ENCODE measurements at regions of chrX and their contacts with region 1.

Region 1: DNA sequence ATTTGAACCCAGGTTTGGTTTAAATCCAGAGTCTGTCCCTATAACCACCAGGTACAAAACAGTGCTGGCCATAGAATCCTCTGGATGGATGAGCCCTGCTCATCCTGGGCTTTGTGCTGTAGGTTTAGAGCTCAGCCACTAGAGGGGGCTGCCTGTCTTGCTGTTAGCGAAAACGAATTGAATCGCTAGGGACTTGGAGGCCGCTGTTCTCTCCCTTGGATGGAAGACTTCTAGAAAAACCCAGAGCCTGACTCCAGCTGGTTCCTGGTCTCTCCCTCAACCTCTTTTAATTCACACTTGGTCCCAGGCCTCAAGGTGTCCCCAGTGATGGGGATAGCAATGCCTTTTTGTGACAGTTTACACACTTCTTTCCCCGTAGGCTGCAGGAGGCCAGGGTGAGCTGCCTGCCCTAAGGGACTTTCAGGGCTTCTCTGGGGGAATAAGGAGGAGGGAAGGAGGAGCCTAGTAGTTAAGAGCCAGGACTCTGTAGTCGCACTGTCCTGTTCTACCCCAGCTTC is 8.7 kb downstream of the RIPPLY1 start:
- DNase-seq: peak; percentile 79
- H3K4me3 Mint-ChIP-seq: no peak overlapping the region
- H3K27ac Mint-ChIP-seq: peak overlapping the region; percentile 25
- H3K4me1 Mint-ChIP-seq: peaks cover 21% of the 10 kb centered on the region
- H3K27me3 Mint-ChIP-seq: peaks cover 53% of the 10 kb centered on the region
- CTCF ChIP-seq: peak; percentile 83

Region 2: DNA sequence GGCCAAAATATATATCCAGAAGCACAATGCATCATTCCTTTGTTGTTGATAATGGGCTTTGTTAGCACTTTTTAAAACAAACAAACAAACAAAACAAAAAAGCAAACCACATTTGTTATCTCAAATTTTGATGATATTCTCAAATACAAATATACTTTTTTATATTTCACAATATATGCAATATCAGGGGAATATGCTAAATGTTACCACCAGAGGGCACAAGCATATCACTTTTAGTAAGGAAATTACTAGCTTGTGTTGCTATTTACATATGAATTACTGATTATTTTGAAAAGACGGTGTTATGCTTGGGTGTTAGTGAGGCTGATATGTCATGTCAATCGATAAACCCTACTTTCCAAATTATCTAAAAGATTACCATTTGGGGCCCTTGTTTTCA is 20.4 kb before region 1 on chrX:
- CTCF ChIA-PET with region 1: interaction called, 50 read pairs
- POLR2A ChIA-PET with region 1: no interaction called
- intact Hi-C with region 1: no loop called
- DNase-seq: peak; percentile 50
- H3K4me3 Mint-ChIP-seq: no peak overlapping the region
- H3K27ac Mint-ChIP-seq: no peak overlapping the region
- H3K4me1 Mint-ChIP-seq: no peaks in the 10 kb centered on the region
- H3K27me3 Mint-ChIP-seq: peaks cover 37% of the 10 kb centered on the region
- CTCF ChIP-seq: peak; percentile 64

Region 3: GRCh38 chrX:106933041-106933961 is 38.9 kb after region 1 on chrX:
- CTCF ChIA-PET with region 1: interaction called, 14 read pairs
- POLR2A ChIA-PET with region 1: no interaction called
- intact Hi-C with region 1: no loop called
- DNase-seq: peak; percentile 8
- H3K4me3 Mint-ChIP-seq: no peak overlapping the region
- H3K27ac Mint-ChIP-seq: no peak overlapping the region
- H3K4me1 Mint-ChIP-seq: no peaks in the 10 kb centered on the region
- H3K27me3 Mint-ChIP-seq: peaks cover 19% of the 10 kb centered on the region
- CTCF ChIP-seq: no peak

Region 4: GRCh38 chrX:106952988-106953387 is 58.5 kb after region 1 on chrX:
- CTCF ChIA-PET with region 1: interaction called, 67 read pairs
- POLR2A ChIA-PET with region 1: no interaction called
- intact Hi-C with region 1: loop called (anchors 1 kb)
- DNase-seq: peak; percentile 33
- H3K4me3 Mint-ChIP-seq: no peak overlapping the region
- H3K27ac Mint-ChIP-seq: no peak overlapping the region
- H3K4me1 Mint-ChIP-seq: no peaks in the 10 kb centered on the region
- H3K27me3 Mint-ChIP-seq: peaks cover 61% of the 10 kb centered on the region
- CTCF ChIP-seq: peak; percentile 54

Region 5: DNA sequence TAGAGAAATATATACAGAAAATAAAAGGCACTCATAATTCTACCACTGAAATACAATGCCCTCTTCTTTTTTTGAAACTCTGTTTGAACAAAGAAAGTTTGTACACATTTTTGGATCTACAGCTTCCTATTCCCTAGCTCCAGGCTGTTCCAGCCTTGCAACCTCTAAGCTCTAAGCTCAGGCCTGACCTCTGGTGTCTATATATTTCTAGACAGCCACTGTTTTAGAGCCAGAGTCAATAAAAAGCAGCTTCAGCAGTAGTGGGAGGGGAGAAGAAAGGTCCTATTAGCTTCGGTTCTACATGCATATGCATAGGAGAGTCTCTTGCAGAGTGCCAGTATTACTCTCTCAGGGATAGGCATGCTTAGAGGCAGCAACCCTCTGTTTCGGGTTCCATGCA is 65.5 kb after region 1 on chrX:
- CTCF ChIA-PET with region 1: interaction called, 67 read pairs
- POLR2A ChIA-PET with region 1: interaction called, 3 read pairs
- intact Hi-C with region 1: loop called (anchors 2 kb)
- DNase-seq: peak; percentile 21
- H3K4me3 Mint-ChIP-seq: no peak overlapping the region
- H3K27ac Mint-ChIP-seq: no peak overlapping the region
- H3K4me1 Mint-ChIP-seq: no peaks in the 10 kb centered on the region
- H3K27me3 Mint-ChIP-seq: peaks cover 56% of the 10 kb centered on the region
- CTCF ChIP-seq: peak; percentile 23

Measured in MCF 10A (cell line).